Breast epithelium (tissue), 4 donors: ENCODE measurements at regions of chr3 and their contacts with region 1.

Region 1: DNA sequence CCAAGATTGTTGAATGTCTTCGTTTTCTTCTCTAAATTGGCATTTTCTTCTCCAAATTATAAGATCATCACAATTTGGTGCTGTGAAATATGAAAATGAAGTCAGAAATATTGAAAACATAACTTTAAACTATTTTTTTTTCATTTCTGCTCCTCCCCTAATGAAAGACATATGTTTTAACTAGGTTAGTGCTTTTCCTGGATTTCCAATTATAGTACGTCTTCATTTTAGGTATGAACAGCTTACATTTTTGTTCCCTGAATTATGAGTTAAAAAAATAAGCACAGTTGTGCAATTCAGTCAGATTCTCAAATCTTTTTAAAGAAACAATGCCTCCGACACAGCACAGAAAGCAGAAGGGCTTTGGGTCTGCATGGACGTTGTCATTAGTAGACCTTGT is 83.5 kb upstream of the CFAP20DC start:
- DNase-seq: no peak
- H3K4me3 ChIP-seq: no peak overlapping the region
- H3K27ac ChIP-seq: peak overlapping the region in 1 of 2 donors; percentile 15
- H3K4me1 ChIP-seq: no peaks in the 10 kb centered on the region
- H3K27me3 ChIP-seq: no peaks in the 10 kb centered on the region
- CTCF ChIP-seq: no peak
- POLR2A ChIP-seq: no peak

Region 2: GRCh38 chr3:59308684-59309083 is 175.4 kb after region 1 on chr3:
- intact Hi-C with region 1: no loop called
- DNase-seq: no peak
- H3K4me3 ChIP-seq: no peak overlapping the region
- H3K27ac ChIP-seq: no peak overlapping the region
- H3K4me1 ChIP-seq: no peaks in the 10 kb centered on the region
- H3K27me3 ChIP-seq: no peaks in the 10 kb centered on the region
- CTCF ChIP-seq: no peak
- POLR2A ChIP-seq: no peak

Region 3: DNA sequence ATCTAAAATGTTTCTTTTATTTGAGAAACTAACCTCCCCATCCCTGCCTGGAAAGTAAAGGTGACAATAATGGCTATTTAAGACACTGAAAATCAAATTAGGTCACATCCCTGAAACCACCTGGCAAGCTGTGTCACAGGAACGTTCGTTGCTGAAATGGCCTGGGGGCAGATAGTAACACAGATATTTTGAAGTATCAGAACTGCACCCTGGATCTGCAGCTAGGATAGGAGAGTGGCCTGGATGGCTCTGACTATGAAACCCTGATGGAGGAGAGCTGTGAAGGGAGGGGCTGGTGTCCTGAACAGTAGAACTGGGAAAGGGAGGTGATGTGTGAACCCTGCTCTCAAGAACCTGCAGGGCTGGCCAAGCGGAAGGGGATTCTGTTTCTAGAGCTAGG is 564.8 kb after region 1 on chr3:
- intact Hi-C with region 1: loop called (anchors 5 kb)
- DNase-seq: peak in 1 of 2 donors; percentile 50
- H3K4me3 ChIP-seq: no peak overlapping the region
- H3K27ac ChIP-seq: no peak overlapping the region
- H3K4me1 ChIP-seq: no peaks in the 10 kb centered on the region
- H3K27me3 ChIP-seq: no peaks in the 10 kb centered on the region
- CTCF ChIP-seq: no peak
- POLR2A ChIP-seq: no peak

Region 4: DNA sequence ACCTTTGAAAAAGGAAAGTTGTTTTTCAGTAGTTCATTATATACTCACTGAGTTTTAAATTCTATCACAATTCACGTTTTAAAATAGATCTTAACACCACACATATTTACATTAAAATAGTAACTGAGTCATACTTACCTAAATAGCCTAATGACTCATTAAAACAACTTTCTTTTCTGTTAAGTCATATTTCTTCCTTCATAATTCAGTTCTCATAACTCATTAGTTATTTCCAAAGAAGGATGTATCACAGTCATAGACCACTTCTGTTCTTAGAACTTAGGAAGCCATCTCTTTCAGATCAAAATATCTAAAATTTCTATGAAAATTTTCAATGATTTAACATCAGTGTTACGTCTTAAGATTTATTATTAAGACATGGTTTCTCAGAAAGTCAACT is 1232.0 kb after region 1 on chr3:
- intact Hi-C with region 1: no loop called
- DNase-seq: no peak
- H3K4me3 ChIP-seq: no peak overlapping the region
- H3K27ac ChIP-seq: no peak overlapping the region
- H3K4me1 ChIP-seq: no peaks in the 10 kb centered on the region
- H3K27me3 ChIP-seq: no peaks in the 10 kb centered on the region
- CTCF ChIP-seq: no peak
- POLR2A ChIP-seq: no peak